Colonic mucosa (tissue), 4 donors: ENCODE measurements at regions of chr21 and their contacts with region 1.

Region 1: DNA sequence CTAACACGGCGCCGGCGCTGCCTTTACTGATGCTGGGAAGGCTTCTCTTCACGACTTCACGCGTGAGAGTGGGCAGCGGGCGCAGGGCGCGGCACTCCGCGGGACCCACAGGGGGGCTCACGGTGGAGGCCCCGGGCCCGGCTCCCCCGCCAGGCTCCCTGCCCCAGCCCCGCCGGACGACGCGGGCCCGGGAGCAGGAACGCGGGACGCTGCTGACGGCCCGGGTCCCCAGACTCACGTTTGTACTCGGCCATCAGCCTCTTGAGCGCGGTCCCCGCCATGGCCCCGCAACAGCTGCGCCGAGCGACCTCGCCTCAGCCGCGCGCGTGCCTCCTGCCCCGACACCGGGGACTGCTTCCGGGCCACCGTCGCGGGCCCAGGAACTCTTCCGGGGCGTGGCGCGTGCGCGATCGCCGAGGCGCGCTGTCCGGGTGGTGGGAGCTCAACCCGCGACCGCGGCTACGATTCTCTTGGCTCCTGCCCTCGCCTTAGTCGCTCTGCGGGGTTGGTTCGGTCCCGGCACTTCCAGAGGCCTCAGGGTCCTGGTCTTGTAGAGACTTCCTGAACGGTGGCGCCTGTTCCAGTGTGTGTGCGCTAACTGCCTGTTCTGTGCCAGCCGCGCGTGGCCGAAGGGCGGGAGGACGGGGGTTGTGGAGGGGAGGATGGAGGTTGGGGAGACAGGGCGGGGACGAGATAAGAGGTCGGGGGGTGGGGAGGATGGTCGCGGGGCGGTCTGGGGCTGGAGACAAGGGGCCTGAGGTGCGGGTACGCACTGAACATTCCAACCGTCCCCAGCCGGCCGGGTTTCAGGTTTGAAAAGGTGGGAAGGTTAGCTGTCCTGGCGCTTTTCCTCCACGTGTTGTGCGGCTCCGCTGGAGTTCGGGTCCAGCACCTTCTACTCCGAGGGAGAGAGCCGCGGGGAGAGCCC is at the start of gene UBE2G2:
- DNase-seq: peak; percentile 87
- H3K4me3 ChIP-seq: peak within 1 kb of the TSS; percentile 93
- H3K27ac ChIP-seq: peak within 1 kb of the TSS; percentile 32
- H3K4me1 ChIP-seq: peaks cover 10% of the 10 kb centered on the region
- H3K27me3 ChIP-seq: no peaks in the 10 kb centered on the region
- CTCF ChIP-seq: no peak
- total RNA-seq, gene UBE2G2: 50.3 to 76.1 TPM

Region 2: GRCh38 chr21:44347911-44348753 is 453.6 kb before region 1 on chr21:
- intact Hi-C with region 1: loop called (anchors 10 kb)
- DNase-seq: no peak
- H3K4me3 ChIP-seq: no peak overlapping the region
- H3K27ac ChIP-seq: no peak overlapping the region
- H3K4me1 ChIP-seq: no peaks in the 10 kb centered on the region
- H3K27me3 ChIP-seq: peaks cover 27% of the 10 kb centered on the region
- CTCF ChIP-seq: no peak

Region 3: GRCh38 chr21:44858286-44858685 is 56.6 kb after region 1 on chr21:
- intact Hi-C with region 1: no loop called
- DNase-seq: no peak
- H3K4me3 ChIP-seq: no peak overlapping the region
- H3K27ac ChIP-seq: no peak overlapping the region
- H3K4me1 ChIP-seq: peaks cover 3% of the 10 kb centered on the region
- H3K27me3 ChIP-seq: no peaks in the 10 kb centered on the region
- CTCF ChIP-seq: no peak

Region 4: DNA sequence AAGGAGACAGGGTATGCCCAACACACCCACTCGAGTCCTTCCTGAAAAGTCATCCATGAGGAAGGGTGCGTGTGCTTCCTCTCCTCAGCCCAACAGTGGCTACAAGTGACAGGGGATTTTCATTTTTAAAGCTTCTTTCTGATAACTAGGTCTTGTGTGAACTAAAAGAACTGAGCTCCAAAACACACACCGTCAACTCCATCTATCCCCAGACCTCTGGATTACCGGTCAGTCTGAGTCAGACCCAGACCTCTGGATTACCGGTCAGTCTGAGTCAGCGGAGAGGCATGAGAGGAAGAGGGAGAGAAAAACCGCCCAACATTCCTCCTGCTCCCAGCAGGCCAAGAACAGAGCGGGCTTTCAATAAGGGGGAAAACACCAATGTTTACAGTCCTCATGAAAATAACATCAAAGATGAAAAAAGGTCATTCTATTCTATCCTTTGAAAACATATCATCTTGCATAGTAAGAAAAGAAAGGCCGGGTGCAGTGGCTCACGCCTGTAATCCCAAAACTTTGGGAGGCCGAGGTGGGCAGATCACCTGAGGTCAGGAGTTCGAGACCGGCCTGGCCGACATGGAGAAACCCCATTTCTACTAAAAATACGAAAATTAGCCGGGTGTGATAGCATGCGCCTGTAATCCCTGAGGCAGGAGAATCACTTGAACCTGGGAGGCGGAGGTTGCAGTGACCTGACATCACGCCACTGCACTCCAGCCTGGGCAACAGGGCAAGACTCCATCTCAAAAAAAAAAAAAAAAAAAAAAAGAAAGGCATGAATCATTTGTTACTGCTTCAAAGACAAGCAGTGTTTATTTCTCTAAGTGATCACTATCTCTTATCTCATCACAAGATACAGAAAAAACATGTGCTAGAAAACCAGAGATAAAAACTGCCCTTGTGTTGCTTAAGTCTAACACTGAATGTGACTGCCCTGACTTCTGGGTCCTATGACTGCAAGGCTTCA is 68.3 kb after region 1 on chr21:
- intact Hi-C with region 1: loop called (anchors 5 kb)
- DNase-seq: no peak
- H3K4me3 ChIP-seq: no peak overlapping the region
- H3K27ac ChIP-seq: peak overlapping the region; percentile 7
- H3K4me1 ChIP-seq: peaks cover 8% of the 10 kb centered on the region
- H3K27me3 ChIP-seq: no peaks in the 10 kb centered on the region
- CTCF ChIP-seq: no peak

Region 5: DNA sequence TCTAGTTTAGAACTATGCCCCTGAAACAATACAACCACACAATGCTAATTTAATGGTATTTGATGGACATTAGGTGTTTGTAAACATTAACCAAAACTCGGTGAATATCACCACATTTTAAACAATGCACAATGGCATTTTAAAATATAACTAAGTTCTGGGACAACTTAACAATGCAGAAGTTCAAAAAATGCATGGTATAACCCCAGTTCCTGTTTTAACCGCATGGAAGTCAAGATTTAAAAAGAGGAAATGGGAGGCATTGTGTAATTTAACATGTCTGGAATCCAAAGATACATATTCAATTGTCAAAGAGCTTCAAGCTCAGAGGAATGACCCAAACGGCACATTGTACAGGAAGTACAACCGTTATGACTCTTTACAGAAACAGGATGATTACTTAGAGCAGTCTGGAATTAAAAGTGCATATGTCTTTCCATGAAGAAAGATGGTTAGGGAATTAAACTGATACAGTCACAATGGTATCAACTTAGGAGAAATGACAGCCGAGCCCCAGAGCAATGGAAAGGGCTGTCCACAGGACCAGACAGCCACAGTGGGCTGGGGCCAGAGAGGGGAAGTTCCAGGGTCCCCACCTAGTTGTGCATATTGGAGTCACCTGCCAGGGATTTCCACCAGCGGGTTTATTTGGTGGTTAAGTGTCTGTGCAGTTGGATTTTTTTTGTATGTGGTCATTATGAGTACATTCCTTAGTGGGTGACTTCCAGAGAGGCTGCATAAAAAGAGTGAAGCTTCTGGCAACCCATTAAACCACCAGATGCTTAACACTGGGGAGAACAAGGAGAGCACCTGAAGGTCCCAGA is 79.2 kb after region 1 on chr21:
- intact Hi-C with region 1: no loop called
- DNase-seq: no peak
- H3K4me3 ChIP-seq: no peak overlapping the region
- H3K27ac ChIP-seq: peak overlapping the region; percentile 7
- H3K4me1 ChIP-seq: no peaks in the 10 kb centered on the region
- H3K27me3 ChIP-seq: no peaks in the 10 kb centered on the region
- CTCF ChIP-seq: no peak

Region 6: GRCh38 chr21:44911389-44912157 is 109.8 kb after region 1 on chr21:
- intact Hi-C with region 1: loop called (anchors 10 kb)
- DNase-seq: peak; percentile 88
- H3K4me3 ChIP-seq: no peak overlapping the region
- H3K27ac ChIP-seq: peak overlapping the region; percentile 42
- H3K4me1 ChIP-seq: peaks cover 19% of the 10 kb centered on the region
- H3K27me3 ChIP-seq: no peaks in the 10 kb centered on the region
- CTCF ChIP-seq: peak; percentile 56